ENCODE measurements at regions of chr20 and their contacts with region 1.

Region 1: GRCh38 chr20:1776681-1777475 is 118.3 kb upstream of the SIRPA start:
- DNase-seq: peak; percentile 58 to 86 (median 74)
- ATAC-seq: peak; percentile 95
- H3K4me3 ChIP-seq: peak overlapping the region; percentile 77
- H3K4me3 Mint-ChIP-seq: peak overlapping the region; percentile 68 to 94 (median 85)
- H3K27ac ChIP-seq: peak overlapping the region; percentile 50
- H3K27ac Mint-ChIP-seq: peak overlapping the region in 5 of 9 donors; percentile 9 to 66 (median 62)
- H3K4me1 ChIP-seq: no peaks in the 10 kb centered on the region
- H3K4me1 Mint-ChIP-seq: peaks cover 12 to 17% (median 16%) of the 10 kb centered on the region in 7 donors
- H3K27me3 ChIP-seq: no peaks in the 10 kb centered on the region
- H3K27me3 Mint-ChIP-seq: peaks cover 7 to 11% (median 8%) of the 10 kb centered on the region in 5 donors

Region 2: DNA sequence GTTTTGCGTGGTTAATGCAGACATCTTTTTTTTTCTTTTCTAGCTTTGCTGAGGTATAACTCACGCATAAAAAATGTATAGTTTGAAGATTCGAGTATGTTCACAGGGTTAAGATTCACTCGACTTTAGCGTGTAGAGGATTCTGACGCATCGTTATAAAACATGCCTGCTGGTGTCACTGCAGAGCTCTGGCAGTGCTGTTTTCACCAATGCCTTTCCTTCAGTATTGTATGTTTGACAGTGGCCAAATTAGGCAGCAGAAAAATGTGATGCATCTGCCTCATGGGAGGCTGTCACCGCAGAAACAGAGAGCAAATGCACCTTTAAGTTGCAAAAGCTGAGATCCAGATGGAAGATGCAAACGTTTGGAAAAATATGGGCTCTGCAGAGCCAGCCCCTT is 267.6 kb before region 1 on chr20:
- CTCF ChIA-PET with region 1: interaction called, 20 read pairs
- POLR2A ChIA-PET with region 1: no interaction called
- intact Hi-C with region 1: loop called (anchors 1 kb)
- DNase-seq: peak in 7 of 9 donors; percentile 4 to 48 (median 34)
- ATAC-seq: peak; percentile 81
- H3K4me3 ChIP-seq: no peak overlapping the region
- H3K4me3 Mint-ChIP-seq: no peak overlapping the region
- H3K27ac ChIP-seq: no peak overlapping the region
- H3K27ac Mint-ChIP-seq: no peak overlapping the region
- H3K4me1 ChIP-seq: no peaks in the 10 kb centered on the region
- H3K4me1 Mint-ChIP-seq: no peaks in the 10 kb centered on the region
- H3K27me3 ChIP-seq: no peaks in the 10 kb centered on the region
- H3K27me3 Mint-ChIP-seq: peaks cover 0 to 42% (median 7%) of the 10 kb centered on the region in 5 donors

Region 3: DNA sequence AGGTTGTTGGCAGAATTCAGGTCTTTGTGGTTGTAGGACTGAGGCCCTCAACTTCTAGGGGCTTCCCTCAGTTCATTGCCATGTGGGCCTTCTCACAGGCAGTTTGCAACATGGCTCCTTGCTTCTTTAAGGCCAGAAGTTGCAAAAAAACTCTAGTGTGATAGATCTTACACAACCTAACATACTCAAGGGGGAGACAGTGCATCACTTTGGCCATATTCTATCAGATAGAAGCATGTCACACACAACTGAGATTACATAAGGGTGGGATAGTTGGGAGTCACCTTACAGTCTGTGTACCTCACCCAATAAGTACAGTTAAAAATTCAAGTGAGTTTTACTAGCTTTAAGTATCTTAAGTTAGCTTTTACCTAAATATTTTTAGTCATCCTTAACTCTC is 220.9 kb before region 1 on chr20:
- CTCF ChIA-PET with region 1: interaction called, 14 read pairs
- POLR2A ChIA-PET with region 1: no interaction called
- intact Hi-C with region 1: loop called (anchors 1 kb)
- DNase-seq: peak in 6 of 9 donors; percentile 10 to 41 (median 26)
- ATAC-seq: peak; percentile 34
- H3K4me3 ChIP-seq: no peak overlapping the region
- H3K4me3 Mint-ChIP-seq: no peak overlapping the region
- H3K27ac ChIP-seq: no peak overlapping the region
- H3K27ac Mint-ChIP-seq: peak overlapping the region in 2 of 9 donors; percentile 13 to 49
- H3K4me1 ChIP-seq: no peaks in the 10 kb centered on the region
- H3K4me1 Mint-ChIP-seq: peaks cover 0 to 14% (median 7%) of the 10 kb centered on the region in 7 donors
- H3K27me3 ChIP-seq: no peaks in the 10 kb centered on the region
- H3K27me3 Mint-ChIP-seq: no peaks in the 10 kb centered on the region

Region 4: GRCh38 chr20:1588533-1589460 is 188.1 kb before region 1 on chr20:
- CTCF ChIA-PET with region 1: no interaction called
- POLR2A ChIA-PET with region 1: no interaction called
- intact Hi-C with region 1: loop called in 1 of 2 experiments (anchors 2 kb)
- DNase-seq: peak in 3 of 9 donors; percentile 23 to 64 (median 56)
- ATAC-seq: no peak
- H3K4me3 ChIP-seq: no peak overlapping the region
- H3K4me3 Mint-ChIP-seq: peak overlapping the region in 4 of 10 donors; percentile 67 to 76 (median 70)
- H3K27ac ChIP-seq: no peak overlapping the region
- H3K27ac Mint-ChIP-seq: peak overlapping the region in 3 of 9 donors; percentile 88 to 91 (median 90)
- H3K4me1 ChIP-seq: peaks cover 0 to 5% of the 10 kb centered on the region in 2 donors
- H3K4me1 Mint-ChIP-seq: peaks cover 0 to 41% (median 0%) of the 10 kb centered on the region in 7 donors
- H3K27me3 ChIP-seq: no peaks in the 10 kb centered on the region
- H3K27me3 Mint-ChIP-seq: no peaks in the 10 kb centered on the region

Region 5: GRCh38 chr20:1764136-1765033 is 12.5 kb before region 1 on chr20:
- CTCF ChIA-PET with region 1: interaction called, 38 read pairs
- POLR2A ChIA-PET with region 1: no interaction called
- intact Hi-C with region 1: loop called (anchors 1 kb)
- DNase-seq: peak in 8 of 9 donors; percentile 20 to 55 (median 44)
- ATAC-seq: peak; percentile 82
- H3K4me3 ChIP-seq: no peak overlapping the region
- H3K4me3 Mint-ChIP-seq: no peak overlapping the region
- H3K27ac ChIP-seq: no peak overlapping the region
- H3K27ac Mint-ChIP-seq: no peak overlapping the region
- H3K4me1 ChIP-seq: no peaks in the 10 kb centered on the region
- H3K4me1 Mint-ChIP-seq: peaks cover 0 to 5% (median 0%) of the 10 kb centered on the region in 7 donors
- H3K27me3 ChIP-seq: no peaks in the 10 kb centered on the region
- H3K27me3 Mint-ChIP-seq: peaks cover 0 to 27% (median 4%) of the 10 kb centered on the region in 5 donors

Region 6: GRCh38 chr20:1870792-1871550 is 94.1 kb after region 1 on chr20:
- CTCF ChIA-PET with region 1: no interaction called
- POLR2A ChIA-PET with region 1: no interaction called
- intact Hi-C with region 1: no loop called
- DNase-seq: no peak
- ATAC-seq: peak; percentile 59
- H3K4me3 ChIP-seq: no peak overlapping the region
- H3K4me3 Mint-ChIP-seq: no peak overlapping the region
- H3K27ac ChIP-seq: no peak overlapping the region
- H3K27ac Mint-ChIP-seq: no peak overlapping the region
- H3K4me1 ChIP-seq: no peaks in the 10 kb centered on the region
- H3K4me1 Mint-ChIP-seq: peaks cover 0 to 6% (median 0%) of the 10 kb centered on the region in 7 donors
- H3K27me3 ChIP-seq: no peaks in the 10 kb centered on the region
- H3K27me3 Mint-ChIP-seq: peaks cover 18 to 52% (median 19%) of the 10 kb centered on the region in 5 donors

Measured in naive thymus-derived CD4-positive, alpha-beta T cell (primary cell).